ENCODE measurements at regions of chr15 and their contacts with region 1.

Region 1: GRCh38 chr15:23039151-23039916 is at the start of gene TUBGCP5:
- DNase-seq: peak; percentile 97 to 98
- ATAC-seq: peak; percentile 92
- total RNA-seq, gene TUBGCP5: 10.0 to 13.0 TPM

Region 2: DNA sequence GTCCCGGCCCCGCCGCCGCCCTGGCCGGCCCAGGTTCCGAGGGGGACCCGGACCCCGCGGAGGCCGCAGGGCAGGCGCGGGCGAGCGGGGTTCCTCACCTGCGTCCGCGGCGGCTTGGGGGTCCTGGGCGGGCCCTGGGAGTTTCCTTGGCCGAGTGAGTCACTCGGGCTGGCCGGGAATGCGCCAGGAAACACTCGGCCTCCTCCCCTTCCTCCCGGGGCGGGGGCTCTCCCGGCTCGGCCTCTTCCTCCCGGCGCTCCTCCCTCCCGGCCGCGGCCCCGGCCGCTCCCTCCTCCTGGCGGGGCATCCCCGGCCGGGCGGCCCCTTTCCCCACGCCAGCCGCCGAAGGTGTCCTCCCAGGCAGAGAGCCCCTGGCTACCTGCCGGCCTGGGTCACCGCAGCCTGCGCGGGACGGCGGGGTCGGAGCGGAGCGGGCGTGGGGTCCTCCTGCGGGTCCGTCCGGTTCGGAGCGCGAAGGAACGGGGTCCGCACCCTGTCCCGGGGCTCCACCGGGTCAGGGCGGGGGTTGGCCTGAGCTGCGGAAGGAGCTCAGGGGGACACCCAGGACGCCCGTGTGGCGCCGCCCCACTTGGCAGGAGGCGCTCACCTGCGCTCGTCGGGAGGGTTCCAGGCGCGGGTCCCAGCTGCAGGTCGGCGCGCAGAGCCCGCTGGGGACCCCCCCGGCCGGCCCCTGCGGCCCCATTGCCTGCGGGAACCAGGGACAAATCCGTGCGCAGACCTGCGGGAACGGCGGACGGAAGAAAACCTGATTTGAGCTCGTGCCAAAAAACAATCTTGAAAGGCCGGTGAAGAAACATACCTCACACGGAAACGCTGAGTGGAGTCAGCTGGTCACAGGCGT is 58.9 kb before region 1 on chr15 and contains the start of gene CYFIP1:
- intact Hi-C with region 1: loop called in 1 of 2 experiments (anchors 10 kb)
- DNase-seq: peak; percentile 86 to 90
- ATAC-seq: peak; percentile 91
- total RNA-seq, gene CYFIP1: 163 to 192 TPM

Region 3: DNA sequence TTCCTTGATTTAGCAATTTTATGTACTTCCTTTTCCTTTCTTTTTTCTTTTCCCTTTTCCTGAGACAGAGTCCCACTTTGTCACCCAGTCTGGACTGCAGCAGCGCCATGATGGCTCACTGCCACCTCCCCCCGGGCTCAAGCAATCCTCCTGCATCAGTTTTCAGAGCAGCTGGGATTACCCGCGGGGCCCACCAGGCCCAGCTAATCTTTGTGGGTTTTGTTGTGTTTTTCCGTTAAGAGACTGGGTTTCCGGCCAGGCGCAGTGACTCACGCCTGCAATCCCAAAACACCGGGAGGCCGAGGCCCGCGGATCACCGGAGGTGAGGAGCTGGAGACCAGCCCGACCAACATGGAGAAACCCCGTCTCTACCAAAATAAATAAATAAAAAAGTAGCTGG is 332.9 kb after region 1 on chr15:
- intact Hi-C with region 1: no loop called
- DNase-seq: no peak
- ATAC-seq: no peak

Measured in left colon (tissue), 2 donors.